ENCODE measurements at regions of chr6 and their contacts with region 1.

Region 1: GRCh38 chr6:130885392-130886192 is 58.4 kb downstream of the SMLR1 start:
- DNase-seq: no peak
- H3K4me3 ChIP-seq: no peak overlapping the region
- CTCF ChIP-seq: peak; percentile 70

Region 2: GRCh38 chr6:130796313-130796905 is 89.2 kb before region 1 on chr6:
- CTCF ChIA-PET with region 1: no interaction called
- POLR2A ChIA-PET with region 1: no interaction called
- DNase-seq: no peak
- H3K4me3 ChIP-seq: no peak overlapping the region
- CTCF ChIP-seq: no peak

Region 3: DNA sequence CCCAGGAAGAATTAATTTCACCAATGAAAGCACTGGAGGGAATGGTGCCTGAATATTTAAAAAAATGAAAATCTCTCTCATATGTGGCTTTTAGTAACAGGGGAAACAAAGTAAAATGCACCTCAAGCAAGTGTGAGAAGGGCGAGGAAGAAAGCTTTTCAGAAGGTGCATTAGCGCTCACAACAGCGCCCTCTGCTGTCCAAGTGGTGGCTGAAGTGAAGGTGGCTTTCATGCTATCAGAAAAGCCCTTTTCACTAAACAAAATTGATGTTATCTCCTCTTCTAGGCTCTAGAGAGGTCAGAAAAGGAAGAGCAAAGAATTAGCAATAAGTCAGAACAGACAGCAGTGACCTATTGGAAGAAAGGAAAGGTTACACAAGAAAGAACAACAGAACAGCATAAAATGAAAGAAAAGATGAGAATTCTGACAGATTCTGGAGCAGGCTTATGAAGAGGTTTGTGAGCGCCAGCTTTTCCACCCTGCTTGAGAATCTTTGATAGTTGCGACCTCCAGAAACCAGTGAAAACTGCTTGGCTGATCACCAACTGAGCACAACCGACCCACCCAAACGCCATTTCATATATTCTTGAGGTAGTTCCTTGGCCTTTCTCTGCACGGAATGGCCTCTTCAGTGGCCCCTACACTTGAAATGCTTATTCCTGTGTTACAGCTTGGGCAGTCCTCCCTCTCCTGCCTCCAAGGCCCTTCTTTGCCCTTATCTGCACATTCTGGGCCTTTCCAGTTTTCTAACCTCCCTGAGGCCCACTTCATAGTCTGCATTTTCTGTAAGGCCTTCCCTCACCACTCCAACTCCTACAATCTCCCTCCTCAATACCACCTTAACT is 13.1 kb before region 1 on chr6:
- CTCF ChIA-PET with region 1: interaction called, 51 read pairs
- POLR2A ChIA-PET with region 1: no interaction called
- DNase-seq: no peak
- H3K4me3 ChIP-seq: no peak overlapping the region
- CTCF ChIP-seq: peak; percentile 84

Region 4: DNA sequence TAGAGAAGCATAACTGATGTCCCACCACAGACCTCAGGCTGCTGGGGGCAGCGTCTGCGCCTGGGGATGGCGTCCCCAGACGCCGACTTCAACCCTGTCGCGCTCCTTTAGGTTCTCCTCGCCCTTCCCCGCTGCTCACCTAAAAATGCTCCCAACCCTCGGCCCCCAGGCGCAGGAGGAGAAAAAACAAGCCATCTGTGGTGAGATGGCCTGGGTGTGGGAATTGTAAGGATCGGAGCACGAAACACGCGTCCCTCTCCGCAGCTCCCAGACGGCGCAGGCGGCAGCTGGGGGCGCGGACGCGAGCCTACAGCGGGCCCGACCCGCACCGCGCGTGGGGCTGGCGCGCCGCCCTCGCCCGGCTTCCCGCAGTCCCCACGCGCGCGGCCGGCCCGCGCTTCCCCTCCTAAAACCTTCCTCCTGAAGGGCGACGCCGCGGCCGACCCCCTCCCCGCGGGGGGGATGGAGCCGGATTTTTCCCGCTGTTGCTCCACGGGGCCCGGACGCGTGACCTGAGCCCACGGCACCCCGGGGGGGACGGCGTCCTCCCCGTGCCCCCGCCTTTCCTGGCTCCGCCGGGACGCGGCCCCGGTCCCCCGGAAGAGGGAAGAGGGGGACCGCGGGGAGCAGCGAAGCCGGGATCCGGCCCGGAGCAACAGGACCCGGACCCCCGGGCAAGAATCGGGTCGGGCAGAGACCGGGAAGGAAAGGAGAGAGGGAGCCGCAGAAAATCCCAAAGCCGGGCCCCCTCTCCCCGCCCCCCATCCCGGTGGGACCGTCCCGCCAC is 176.8 kb after region 1 on chr6:
- CTCF ChIA-PET with region 1: interaction called, 18 read pairs
- POLR2A ChIA-PET with region 1: interaction called, 3 read pairs
- DNase-seq: no peak
- H3K4me3 ChIP-seq: peak overlapping the region; percentile 78
- CTCF ChIP-seq: no peak

Region 5: GRCh38 chr6:131122007-131122406 is 236.4 kb after region 1 on chr6:
- CTCF ChIA-PET with region 1: interaction called, 231 read pairs
- POLR2A ChIA-PET with region 1: no interaction called
- DNase-seq: no peak
- H3K4me3 ChIP-seq: no peak overlapping the region
- CTCF ChIP-seq: no peak

Region 6: DNA sequence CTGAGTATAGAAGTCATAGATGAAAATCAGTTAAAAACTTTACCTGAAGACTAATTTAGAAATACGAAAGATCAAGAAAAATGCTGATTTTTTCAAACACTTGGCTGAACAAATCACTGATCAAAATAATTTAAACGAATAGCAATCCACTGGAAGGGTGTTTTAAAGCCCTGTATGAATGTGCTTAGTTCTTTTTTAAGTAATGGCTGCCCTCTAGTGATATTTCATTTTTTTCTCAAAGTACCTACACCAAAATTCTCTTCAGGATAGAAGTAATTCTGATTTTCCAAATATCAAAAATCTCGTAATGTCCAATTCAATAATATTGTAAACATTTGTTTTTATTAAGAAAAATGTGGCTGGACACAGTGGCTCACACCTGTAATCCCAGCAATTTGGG is 282.2 kb after region 1 on chr6:
- CTCF ChIA-PET with region 1: interaction called, 32 read pairs
- POLR2A ChIA-PET with region 1: no interaction called
- DNase-seq: no peak
- H3K4me3 ChIP-seq: no peak overlapping the region
- CTCF ChIP-seq: no peak

Region 7: GRCh38 chr6:131532580-131533039 is 647.0 kb after region 1 on chr6:
- CTCF ChIA-PET with region 1: interaction called, 26 read pairs
- POLR2A ChIA-PET with region 1: no interaction called
- DNase-seq: no peak
- H3K4me3 ChIP-seq: no peak overlapping the region
- CTCF ChIP-seq: no peak

Measured in AG04449 (cell line).